ENCODE measurements at regions of chr1 and their contacts with region 1.

Region 1: DNA sequence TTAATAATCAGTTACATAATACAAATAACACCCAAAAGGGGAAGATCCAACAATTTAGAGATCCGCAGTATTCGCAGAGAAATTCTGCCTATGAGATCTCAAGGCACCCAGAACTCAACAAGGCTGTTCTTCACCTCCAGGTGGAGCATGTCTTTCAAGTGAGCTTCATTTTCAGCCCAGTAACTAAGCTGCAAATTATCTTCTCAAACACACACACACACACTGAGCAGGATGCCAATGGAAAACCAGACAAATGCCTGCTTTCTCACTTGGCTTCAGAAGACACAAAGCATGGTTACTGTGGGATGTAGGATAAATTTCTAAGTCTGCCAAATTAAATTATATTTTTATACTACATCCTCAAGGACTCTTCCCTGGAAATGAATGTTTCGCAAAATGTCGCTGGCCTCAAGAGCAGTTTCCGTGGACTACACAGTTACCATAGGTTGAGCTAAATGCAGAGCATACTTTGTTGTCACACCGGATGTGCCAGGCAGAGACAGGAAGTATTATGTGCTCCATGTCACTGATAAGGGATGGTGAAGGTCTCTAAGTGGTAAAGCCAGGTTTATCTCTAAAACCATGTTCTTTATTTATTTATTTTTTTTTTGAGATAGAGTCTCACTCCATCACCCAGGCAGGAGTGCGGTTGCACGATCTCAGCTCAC is 30.3 kb downstream of the UBR4 start:
- DNase-seq: peak; percentile 41
- ATAC-seq: peak; percentile 61
- H3K4me3 ChIP-seq: no peak overlapping the region
- H3K27ac ChIP-seq: no peak overlapping the region
- H3K4me1 ChIP-seq: no peaks in the 10 kb centered on the region
- H3K27me3 ChIP-seq: no peaks in the 10 kb centered on the region
- CTCF ChIP-seq: peak; percentile 18; the same call in 1 of the 2 replicates
- POLR2A ChIP-seq: no peak
- RAD21 ChIP-seq: no peak

Region 2: DNA sequence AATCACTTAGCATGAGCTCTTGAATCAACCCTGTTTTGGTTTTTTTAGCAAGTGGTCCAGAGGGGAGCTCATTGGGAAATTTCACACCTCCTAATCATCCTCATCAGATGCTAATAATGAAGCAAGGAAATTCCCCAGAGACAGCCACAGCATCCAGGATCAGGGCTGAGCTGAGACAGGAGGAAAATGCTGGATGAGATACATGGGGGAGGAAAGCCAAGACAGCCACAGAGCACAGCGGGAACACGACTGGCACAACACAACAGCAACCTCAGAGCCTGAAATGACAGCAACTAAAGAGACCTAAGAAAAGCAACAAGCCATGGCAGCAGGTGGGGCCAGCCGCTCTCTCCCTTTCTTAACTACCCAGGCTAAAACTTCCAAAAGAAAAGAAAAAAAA is 40.0 kb before region 1 on chr1:
- CTCF ChIA-PET with region 1: no interaction called
- POLR2A ChIA-PET with region 1: no interaction called
- dilution Hi-C with region 1: no loop called
- in situ Hi-C with region 1: no loop called
- intact Hi-C with region 1: loop called (anchors 10 kb)
- DNase-seq: no peak
- ATAC-seq: no peak
- H3K4me3 ChIP-seq: no peak overlapping the region
- H3K27ac ChIP-seq: no peak overlapping the region
- H3K4me1 ChIP-seq: no peaks in the 10 kb centered on the region
- H3K27me3 ChIP-seq: no peaks in the 10 kb centered on the region
- CTCF ChIP-seq: no peak
- POLR2A ChIP-seq: no peak
- RAD21 ChIP-seq: no peak

Region 3: DNA sequence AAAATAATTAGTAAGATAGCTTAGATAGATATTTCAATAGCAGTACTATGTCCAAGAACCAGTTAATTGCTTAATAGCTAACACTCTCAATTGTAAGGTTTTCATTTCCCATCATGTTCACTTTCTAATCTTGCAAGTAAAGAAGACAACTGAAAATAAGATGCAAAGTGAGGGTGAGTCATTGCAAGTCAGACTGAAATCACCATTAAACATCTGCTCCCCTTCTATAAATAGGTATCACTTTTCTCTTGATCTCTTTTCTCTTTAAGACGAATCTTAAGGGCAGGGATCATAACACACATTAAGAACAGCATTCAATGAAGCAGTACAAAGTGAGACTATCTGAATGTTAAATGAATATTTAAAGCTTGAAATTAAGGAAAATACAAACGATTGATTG is 10.1 kb before region 1 on chr1:
- CTCF ChIA-PET with region 1: interaction called, 4 read pairs
- POLR2A ChIA-PET with region 1: no interaction called
- dilution Hi-C with region 1: no loop called
- in situ Hi-C with region 1: no loop called
- intact Hi-C with region 1: loop called (anchors 2 kb)
- DNase-seq: peak; percentile 80
- ATAC-seq: peak; percentile 84
- H3K4me3 ChIP-seq: no peak overlapping the region
- H3K27ac ChIP-seq: no peak overlapping the region
- H3K4me1 ChIP-seq: 0 out of 2 replicates have a peak, but pooled peaks cover 2% of the 10 kb centered on the region
- H3K27me3 ChIP-seq: no peaks in the 10 kb centered on the region
- CTCF ChIP-seq: no peak
- POLR2A ChIP-seq: no peak
- RAD21 ChIP-seq: no peak

Region 4: GRCh38 chr1:19240673-19241538 is 61.2 kb after region 1 on chr1:
- CTCF ChIA-PET with region 1: no interaction called
- POLR2A ChIA-PET with region 1: no interaction called
- dilution Hi-C with region 1: no loop called
- in situ Hi-C with region 1: no loop called
- intact Hi-C with region 1: loop called (anchors 2 kb)
- DNase-seq: peak; percentile 69
- ATAC-seq: peak; percentile 99
- H3K4me3 ChIP-seq: no peak overlapping the region
- H3K27ac ChIP-seq: no peak overlapping the region
- H3K4me1 ChIP-seq: no peaks in the 10 kb centered on the region
- H3K27me3 ChIP-seq: no peaks in the 10 kb centered on the region
- CTCF ChIP-seq: peak; percentile 95
- POLR2A ChIP-seq: no peak
- RAD21 ChIP-seq: peak; percentile 87